ENCODE measurements at regions of chr17 and their contacts with region 1.

Region 1: DNA sequence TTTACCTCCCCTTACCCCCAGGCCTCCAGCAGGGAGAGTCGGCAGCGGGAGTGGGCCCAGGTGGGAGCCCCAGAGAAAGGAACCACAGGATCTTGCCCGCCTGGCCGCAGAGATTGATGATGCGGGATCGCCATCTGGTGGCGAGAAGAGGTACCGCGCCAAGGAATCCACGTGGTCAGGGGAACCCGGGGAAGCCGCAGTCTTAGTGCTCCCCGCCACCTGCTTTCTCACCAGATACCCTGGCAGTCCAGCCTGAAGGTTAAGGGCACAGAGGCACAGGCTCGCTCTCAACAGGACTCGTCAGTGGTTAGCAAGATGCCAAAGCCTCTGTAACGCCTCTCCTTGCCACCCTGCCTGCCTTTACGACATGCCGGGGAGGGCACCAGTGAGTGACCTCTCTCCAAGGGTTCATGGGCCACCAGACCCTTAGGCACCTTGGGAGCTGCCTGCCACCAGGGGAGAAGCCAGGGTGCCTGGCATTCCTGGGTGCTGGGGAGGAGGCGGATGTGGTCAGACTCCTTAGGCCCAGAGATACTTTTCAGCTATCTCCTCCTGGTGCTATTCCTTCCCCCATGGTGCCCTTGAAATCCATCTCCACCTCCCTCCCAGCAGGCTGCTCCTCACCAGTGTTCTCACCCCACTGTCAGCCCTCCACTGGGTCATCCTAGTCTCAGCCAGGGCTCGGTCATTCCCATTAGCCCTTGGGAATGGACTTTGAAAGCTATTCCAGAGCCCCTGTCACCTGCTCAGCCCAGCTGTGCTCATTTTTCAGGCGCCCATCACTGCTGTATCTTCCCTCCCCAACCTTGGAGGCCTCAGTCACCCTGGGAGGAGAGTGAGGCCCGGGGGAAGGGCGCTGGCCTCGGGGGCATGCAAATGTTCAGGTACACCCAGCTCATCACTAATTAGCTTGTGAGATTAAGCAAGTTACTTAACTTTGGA is 5.5 kb upstream of the RHBDF2 start:
- DNase-seq: peak; percentile 91
- ATAC-seq: peak; percentile 82
- H3K4me3 Mint-ChIP-seq: no peak overlapping the region
- H3K27ac Mint-ChIP-seq: no peak overlapping the region
- H3K4me1 Mint-ChIP-seq: peaks cover 22% of the 10 kb centered on the region
- H3K27me3 Mint-ChIP-seq: no peaks in the 10 kb centered on the region

Region 2: GRCh38 chr17:76408052-76408849 is 98.4 kb before region 1 on chr17:
- CTCF ChIA-PET with region 1: interaction called, 19 read pairs
- DNase-seq: peak; percentile 80
- ATAC-seq: peak; percentile 81
- H3K4me3 Mint-ChIP-seq: no peak overlapping the region
- H3K27ac Mint-ChIP-seq: no peak overlapping the region
- H3K4me1 Mint-ChIP-seq: peaks cover 4% of the 10 kb centered on the region
- H3K27me3 Mint-ChIP-seq: no peaks in the 10 kb centered on the region

Region 3: GRCh38 chr17:76452660-76453430 is 53.8 kb before region 1 on chr17 and contains the start of gene UBE2O:
- CTCF ChIA-PET with region 1: interaction called, 34 read pairs
- DNase-seq: peak; percentile 95
- ATAC-seq: peak; percentile 94
- H3K4me3 Mint-ChIP-seq: peak within 1 kb of the TSS; percentile 86
- H3K27ac Mint-ChIP-seq: peak within 1 kb of the TSS; percentile 54
- H3K4me1 Mint-ChIP-seq: peaks cover 34% of the 10 kb centered on the region
- H3K27me3 Mint-ChIP-seq: peaks cover 6% of the 10 kb centered on the region
- total RNA-seq, gene UBE2O: 30.2 to 34.7 TPM

Region 4: DNA sequence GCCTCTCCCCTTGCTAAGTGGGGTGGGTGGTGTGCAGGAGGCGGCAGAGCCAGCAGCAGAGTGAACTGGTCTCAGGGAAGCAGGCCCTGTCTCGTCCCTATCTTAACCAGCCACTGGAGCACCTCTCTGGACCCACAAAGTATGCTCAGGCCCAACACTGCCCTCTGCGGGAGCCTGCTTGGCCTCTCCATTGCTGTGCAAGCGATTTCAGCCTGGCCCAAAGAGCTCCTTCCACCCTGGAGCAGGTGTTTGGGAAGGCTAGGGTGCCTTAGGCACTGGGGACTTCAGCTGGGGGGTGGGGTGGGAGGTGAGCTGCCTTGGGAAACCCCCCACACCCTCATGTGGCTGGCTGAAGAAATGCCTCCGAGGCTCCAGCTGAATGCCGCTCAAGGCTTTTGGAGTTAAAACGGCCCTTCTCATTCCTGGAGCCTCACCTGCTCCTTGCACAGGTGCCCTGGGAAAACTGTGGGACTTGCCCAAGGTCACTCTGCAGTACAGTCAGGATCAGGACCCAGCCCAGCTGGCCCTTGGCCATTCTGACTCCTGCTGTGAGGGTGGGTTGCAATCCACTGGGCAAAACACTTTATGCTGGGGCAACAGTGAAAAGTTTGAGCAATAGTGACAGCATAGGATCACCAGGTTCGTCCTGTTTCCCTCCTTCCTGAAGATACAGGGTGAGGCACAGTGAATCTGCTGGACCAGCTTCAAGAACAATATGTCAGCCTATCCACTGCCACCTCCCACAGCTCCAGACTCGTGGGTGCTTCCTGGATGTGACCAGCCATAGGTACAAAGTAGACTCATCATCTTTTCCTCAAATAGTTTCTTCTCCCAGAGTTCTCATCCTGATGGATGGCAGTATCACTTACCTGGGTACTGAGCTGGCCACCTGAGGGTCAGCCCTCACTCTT is 47.8 kb before region 1 on chr17:
- CTCF ChIA-PET with region 1: interaction called, 34 read pairs
- DNase-seq: no peak
- ATAC-seq: peak; percentile 25
- H3K4me3 Mint-ChIP-seq: no peak overlapping the region
- H3K27ac Mint-ChIP-seq: no peak overlapping the region
- H3K4me1 Mint-ChIP-seq: no peaks in the 10 kb centered on the region
- H3K27me3 Mint-ChIP-seq: peaks cover 16% of the 10 kb centered on the region

Region 5: DNA sequence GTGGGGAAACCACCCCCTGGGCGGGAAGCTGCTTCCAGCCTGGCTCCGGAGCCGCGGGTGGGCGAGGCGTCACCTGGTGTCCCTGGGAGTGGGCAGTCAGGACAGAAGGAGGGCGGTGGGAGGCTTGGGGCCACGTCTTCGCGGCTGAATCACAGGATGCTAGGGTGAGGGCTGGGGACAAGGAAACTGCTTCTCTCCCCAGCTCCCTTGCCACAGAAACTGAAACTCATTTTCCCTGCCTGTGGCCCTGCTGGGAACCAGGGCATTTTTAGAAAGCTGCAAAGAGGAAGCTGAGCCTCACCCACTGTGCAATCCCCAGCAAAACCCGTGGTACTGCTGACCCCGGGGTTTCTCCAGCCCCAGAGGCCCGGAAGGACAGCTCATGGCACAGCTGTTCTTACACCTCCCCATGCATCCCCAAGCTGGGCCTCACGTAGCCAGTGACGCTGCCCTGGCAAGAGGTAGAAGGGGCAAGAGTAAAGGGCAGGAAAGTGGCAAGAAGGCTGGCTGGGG is 13.6 kb before region 1 on chr17:
- CTCF ChIA-PET with region 1: interaction called, 27 read pairs
- DNase-seq: peak; percentile 75
- ATAC-seq: peak; percentile 63
- H3K4me3 Mint-ChIP-seq: peak overlapping the region; percentile 73
- H3K27ac Mint-ChIP-seq: peak overlapping the region; percentile 98
- H3K4me1 Mint-ChIP-seq: peaks cover 57% of the 10 kb centered on the region
- H3K27me3 Mint-ChIP-seq: no peaks in the 10 kb centered on the region

Region 6: DNA sequence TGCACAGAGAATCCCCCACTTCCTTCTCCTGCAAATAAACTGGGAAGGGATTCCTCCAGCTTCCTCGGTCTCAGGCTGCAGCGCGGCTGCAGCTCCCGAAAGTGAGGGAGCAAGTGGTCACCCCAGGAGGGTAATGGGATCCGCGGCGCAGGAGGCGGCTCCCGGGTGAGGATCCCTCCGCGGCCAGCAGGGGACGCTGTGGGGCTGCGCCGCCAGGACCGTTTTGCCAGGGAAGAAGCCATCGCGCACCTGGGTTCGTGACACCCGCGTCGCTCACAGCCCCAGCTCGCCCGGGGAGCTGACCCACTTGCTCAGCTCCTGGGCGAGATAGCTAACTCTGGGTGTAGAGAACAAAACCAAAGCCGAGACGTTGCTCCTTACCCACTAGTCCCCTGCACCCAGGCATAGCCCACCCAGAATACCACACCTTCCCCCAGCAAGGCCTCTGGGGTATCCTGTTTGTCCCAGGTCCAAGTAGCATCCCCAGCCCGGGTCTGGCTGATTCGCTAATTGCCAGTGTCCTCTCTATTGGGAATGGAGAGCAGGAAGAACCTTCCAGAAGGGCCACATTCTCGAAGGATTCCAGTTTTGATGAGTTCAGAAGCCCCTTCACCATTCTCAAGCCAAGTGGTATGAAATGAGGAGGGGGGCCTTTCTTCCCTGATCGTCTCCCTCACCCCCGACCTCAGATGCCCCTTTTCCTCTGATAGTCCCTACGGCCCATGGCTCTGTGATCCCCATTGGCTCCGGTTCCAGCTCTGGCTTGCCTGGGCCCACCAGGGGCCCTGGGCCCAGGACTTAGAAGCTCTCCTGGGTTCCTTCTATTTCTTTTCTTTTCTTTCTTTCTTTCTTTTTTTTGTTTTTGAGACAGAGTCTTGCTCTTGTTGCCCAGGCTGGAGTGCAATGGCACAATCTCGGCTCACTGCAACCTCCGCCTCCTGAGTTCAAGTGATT is 16.7 kb after region 1 on chr17:
- CTCF ChIA-PET with region 1: interaction called, 25 read pairs
- DNase-seq: peak; percentile 85
- ATAC-seq: peak; percentile 88
- H3K4me3 Mint-ChIP-seq: peak overlapping the region; percentile 8
- H3K27ac Mint-ChIP-seq: no peak overlapping the region
- H3K4me1 Mint-ChIP-seq: peaks cover 15% of the 10 kb centered on the region
- H3K27me3 Mint-ChIP-seq: peaks cover 7% of the 10 kb centered on the region

Region 7: DNA sequence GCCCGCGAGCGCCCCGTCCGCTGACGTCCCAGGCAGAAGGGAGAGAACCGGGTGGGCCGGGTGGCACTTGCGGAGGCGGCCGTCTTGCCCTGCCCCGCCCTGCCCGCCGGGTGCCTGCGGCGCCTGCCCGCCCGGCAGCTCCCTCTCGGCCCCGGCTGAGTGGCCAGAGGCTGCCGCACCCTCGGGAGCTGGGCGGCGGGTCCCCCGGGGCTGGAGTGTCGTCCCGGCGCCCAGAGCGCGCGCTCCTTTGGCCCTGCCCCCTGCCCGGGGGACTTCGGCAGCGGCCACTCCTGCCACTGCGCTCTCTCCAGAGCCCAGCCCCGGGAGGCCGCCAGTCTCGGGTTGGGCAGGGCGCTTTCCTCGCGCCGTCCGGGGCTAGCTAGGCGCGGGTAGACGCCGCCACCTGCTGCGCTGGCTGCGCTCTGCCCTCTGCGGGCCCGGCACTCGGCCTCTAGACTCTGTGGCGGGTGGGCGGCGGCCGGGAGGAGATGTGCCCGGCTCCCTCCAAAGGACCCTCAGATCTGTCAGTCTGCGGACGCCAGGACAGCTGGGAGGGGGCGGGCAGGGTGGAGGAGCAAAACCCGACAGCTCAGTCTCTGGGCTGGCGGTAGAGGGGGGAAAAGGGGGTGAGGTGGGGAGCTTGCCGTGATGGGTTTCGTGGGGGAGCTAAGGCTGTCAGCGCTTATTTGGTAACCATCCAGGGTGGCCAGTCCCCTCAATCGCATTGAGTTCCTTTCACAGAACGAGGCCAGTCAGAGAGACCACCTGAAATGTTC is 79.3 kb after region 1 on chr17 and contains the start of gene ST6GALNAC2:
- CTCF ChIA-PET with region 1: no interaction called
- DNase-seq: peak; percentile 51
- ATAC-seq: peak; percentile 80
- H3K4me3 Mint-ChIP-seq: peak within 1 kb of the TSS; percentile 38
- H3K27ac Mint-ChIP-seq: no peak within 1 kb of the TSS
- H3K4me1 Mint-ChIP-seq: peaks cover 6% of the 10 kb centered on the region
- H3K27me3 Mint-ChIP-seq: peaks cover 61% of the 10 kb centered on the region
- total RNA-seq, gene ST6GALNAC2: not detected

Region 8: GRCh38 chr17:76631829-76632565 is 125.3 kb after region 1 on chr17:
- CTCF ChIA-PET with region 1: no interaction called
- DNase-seq: no peak
- ATAC-seq: peak; percentile 39
- H3K4me3 Mint-ChIP-seq: no peak overlapping the region
- H3K27ac Mint-ChIP-seq: no peak overlapping the region
- H3K4me1 Mint-ChIP-seq: no peaks in the 10 kb centered on the region
- H3K27me3 Mint-ChIP-seq: peaks cover 16% of the 10 kb centered on the region

Measured in activated CD8-positive, alpha-beta memory T cell treated with anti-CD3 and anti-CD28 coated beads, Interleukin-2, amount 10 ng/mL, durations not matched to agents 7 days and 5 days (primary cell).